ENCODE measurements at regions of chr10 and their contacts with region 1.

Region 1: GRCh38 chr10:5813287-5814109 is at the start of gene GDI2:
- DNase-seq: peak; percentile 98
- H3K4me3 Mint-ChIP-seq: peak within 1 kb of the TSS; percentile 82
- H3K27ac Mint-ChIP-seq: peak within 1 kb of the TSS; percentile 95
- H3K4me1 Mint-ChIP-seq: peaks cover 60% of the 10 kb centered on the region
- H3K27me3 Mint-ChIP-seq: no peaks in the 10 kb centered on the region
- total RNA-seq, gene GDI2: 283 to 286 TPM

Region 2: GRCh38 chr10:5684318-5684970 is 129.1 kb before region 1 on chr10 and contains the start of gene TASOR2:
- CTCF ChIA-PET with region 1: interaction called, 3 read pairs
- POLR2A ChIA-PET with region 1: interaction called, 3 read pairs
- intact Hi-C with region 1: loop called (anchors 1 kb)
- DNase-seq: peak; percentile 98
- H3K4me3 Mint-ChIP-seq: peak within 1 kb of the TSS; percentile 98
- H3K27ac Mint-ChIP-seq: peak within 1 kb of the TSS; percentile 94
- H3K4me1 Mint-ChIP-seq: peaks cover 56% of the 10 kb centered on the region
- H3K27me3 Mint-ChIP-seq: peaks cover 3% of the 10 kb centered on the region
- total RNA-seq, gene TASOR2: 41.8 to 43.8 TPM

Region 3: DNA sequence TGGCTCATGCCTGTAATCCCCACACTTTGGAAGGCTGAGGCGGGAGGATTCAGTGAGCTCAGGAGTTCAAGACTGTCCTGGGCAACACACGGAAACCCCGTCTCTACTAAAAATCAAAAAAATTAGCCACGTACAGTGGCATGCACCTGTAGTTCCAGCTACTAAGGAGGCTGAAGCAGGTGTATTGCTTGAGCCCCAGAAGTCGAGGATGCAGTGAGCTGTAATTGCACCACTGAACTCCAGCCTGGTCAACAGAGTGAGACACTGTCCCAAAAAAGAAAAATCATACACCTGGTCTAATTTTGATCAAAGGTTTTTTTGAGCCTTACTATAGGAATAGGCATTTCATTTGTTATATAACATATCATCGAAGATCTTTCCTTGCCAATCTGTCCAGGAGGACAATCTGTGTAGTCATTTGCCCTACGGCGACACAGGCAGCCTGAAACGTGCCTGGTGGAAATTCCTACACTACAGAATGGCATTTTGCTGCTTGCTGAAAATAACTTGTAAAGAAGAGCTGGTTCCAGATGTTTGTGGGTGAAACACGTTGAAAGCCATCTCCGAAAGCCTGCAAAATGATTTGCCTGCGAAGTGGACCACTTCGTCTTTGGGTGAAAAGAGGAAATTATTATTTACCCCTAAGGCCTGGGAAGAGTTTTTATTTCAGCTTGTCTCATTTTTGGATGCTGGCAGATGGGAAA is 31.0 kb after region 1 on chr10:
- CTCF ChIA-PET with region 1: interaction called, 5 read pairs
- POLR2A ChIA-PET with region 1: interaction called, 10 read pairs
- intact Hi-C with region 1: no loop called
- DNase-seq: no peak
- H3K4me3 Mint-ChIP-seq: no peak overlapping the region
- H3K27ac Mint-ChIP-seq: peak overlapping the region; percentile 11
- H3K4me1 Mint-ChIP-seq: peaks cover 25% of the 10 kb centered on the region
- H3K27me3 Mint-ChIP-seq: peaks cover 5% of the 10 kb centered on the region

Region 4: GRCh38 chr10:5889624-5890451 is 76.3 kb after region 1 on chr10 and contains the starts of genes ANKRD16 and FBH1:
- CTCF ChIA-PET with region 1: interaction called, 5 read pairs
- POLR2A ChIA-PET with region 1: interaction called, 20 read pairs
- intact Hi-C with region 1: loop called (anchors 1 kb)
- DNase-seq: peak; percentile 98
- H3K4me3 Mint-ChIP-seq: peak within 1 kb of the TSS; percentile 93
- H3K27ac Mint-ChIP-seq: peak within 1 kb of the TSS; percentile 80
- H3K4me1 Mint-ChIP-seq: peaks cover 50% of the 10 kb centered on the region
- H3K27me3 Mint-ChIP-seq: no peaks in the 10 kb centered on the region
- total RNA-seq, gene ANKRD16: 5.9 to 6.4 TPM
- total RNA-seq, gene FBH1: 57.8 to 63.4 TPM

Region 5: DNA sequence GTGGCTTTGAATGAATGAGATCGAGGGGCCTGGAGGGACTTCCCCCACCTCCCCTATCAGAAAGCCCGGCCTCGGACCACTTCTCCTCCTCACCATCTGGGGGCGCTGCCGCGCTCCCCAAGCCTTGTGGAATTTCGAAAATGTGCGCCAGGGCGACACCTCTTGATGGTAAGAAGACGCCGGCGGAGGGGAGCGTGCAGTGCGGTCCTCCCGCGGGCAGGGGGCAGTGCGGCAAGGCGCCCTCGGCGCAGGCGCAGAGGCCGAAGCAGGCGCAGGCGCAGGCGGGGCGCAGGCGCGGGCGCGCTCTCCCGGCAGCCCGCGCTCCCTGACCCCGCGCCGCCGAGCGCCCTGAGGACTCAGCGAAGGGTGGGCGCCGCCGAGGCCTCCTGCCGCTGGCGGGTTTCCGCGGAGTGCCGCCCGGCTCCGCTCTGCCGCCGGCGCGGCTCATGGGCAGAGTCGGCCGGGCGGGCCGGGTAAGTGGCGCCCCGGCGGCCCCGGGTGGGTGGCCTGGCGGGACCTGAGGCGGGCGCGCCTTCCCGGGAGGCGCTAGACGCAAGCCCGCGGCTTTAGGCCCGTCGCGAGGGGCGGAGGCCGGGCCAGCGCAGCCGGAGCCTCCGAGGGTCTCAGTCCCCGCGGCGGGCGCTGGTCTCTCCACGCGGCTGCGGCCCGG is 275.4 kb after region 1 on chr10 and contains the start of gene RBM17:
- CTCF ChIA-PET with region 1: interaction called, 4 read pairs
- POLR2A ChIA-PET with region 1: no interaction called
- intact Hi-C with region 1: loop called (anchors 1 kb)
- DNase-seq: peak; percentile 98
- H3K4me3 Mint-ChIP-seq: peak within 1 kb of the TSS; percentile 90
- H3K27ac Mint-ChIP-seq: peak within 1 kb of the TSS; percentile 83
- H3K4me1 Mint-ChIP-seq: peaks cover 71% of the 10 kb centered on the region
- H3K27me3 Mint-ChIP-seq: no peaks in the 10 kb centered on the region
- total RNA-seq, gene RBM17: 151 to 155 TPM

Region 6: GRCh38 chr10:6151087-6151977 is 337.8 kb after region 1 on chr10:
- CTCF ChIA-PET with region 1: no interaction called
- POLR2A ChIA-PET with region 1: no interaction called
- intact Hi-C with region 1: no loop called
- DNase-seq: peak; percentile 61
- H3K4me3 Mint-ChIP-seq: no peak overlapping the region
- H3K27ac Mint-ChIP-seq: peak overlapping the region; percentile 15
- H3K4me1 Mint-ChIP-seq: peaks cover 47% of the 10 kb centered on the region
- H3K27me3 Mint-ChIP-seq: no peaks in the 10 kb centered on the region